ENCODE measurements at regions of chr7 and their contacts with region 1.

Region 1: DNA sequence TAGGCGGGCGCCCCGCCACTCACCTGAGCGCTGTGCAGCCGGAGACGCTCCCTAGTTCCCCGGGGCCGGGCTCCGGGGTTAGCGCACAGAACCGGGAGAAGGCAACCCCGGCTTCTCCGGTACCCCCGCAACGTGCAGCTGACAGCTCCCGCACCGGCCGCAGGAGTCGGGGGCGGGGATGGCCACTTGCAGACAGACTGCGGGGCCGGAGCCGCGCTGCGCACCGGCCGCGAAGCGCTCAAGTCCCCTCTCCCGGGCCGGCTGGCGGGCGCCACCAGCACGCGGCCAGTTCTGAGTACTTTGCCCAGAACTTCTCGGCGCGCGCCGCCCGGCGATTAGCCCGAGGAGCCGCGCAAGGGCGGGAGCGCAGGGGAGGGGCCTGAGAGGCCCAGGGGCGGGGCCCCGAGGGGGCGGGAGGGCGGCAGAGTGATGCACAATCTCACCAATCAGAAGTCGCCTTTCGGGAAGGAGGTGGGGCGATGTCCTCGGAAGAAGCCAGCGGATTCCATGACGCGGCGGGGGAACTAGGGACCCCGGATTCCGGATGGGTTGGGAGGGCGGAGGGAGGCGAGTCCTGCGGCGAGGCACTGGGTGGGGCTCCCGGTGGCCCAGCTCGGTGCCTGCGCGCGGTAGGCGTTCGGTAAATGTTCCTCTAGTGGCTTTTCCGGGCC is at the start of gene OSBPL3:
- DNase-seq: peak; percentile 90 to 98 (median 94)
- ATAC-seq: peak; percentile 80
- H3K4me3 ChIP-seq: peak within 1 kb of the TSS; percentile 84
- H3K4me3 Mint-ChIP-seq: peak within 1 kb of the TSS; percentile 98
- H3K27ac ChIP-seq: peak within 1 kb of the TSS; percentile 71 to 77
- H3K27ac Mint-ChIP-seq: peak within 1 kb of the TSS; percentile 86
- H3K4me1 ChIP-seq: peaks cover 47% of the 10 kb centered on the region
- H3K4me1 Mint-ChIP-seq: peaks cover 66% of the 10 kb centered on the region
- H3K27me3 ChIP-seq: no peaks in the 10 kb centered on the region
- H3K27me3 Mint-ChIP-seq: no peaks in the 10 kb centered on the region
- CTCF ChIP-seq: peak; percentile 6
- total RNA-seq, gene OSBPL3: 25.4 to 25.9 TPM

Region 2: GRCh38 chr7:24819916-24820689 is 159.9 kb before region 1 on chr7:
- CTCF ChIA-PET with region 1: interaction called, 23 read pairs
- POLR2A ChIA-PET with region 1: interaction called, 86 read pairs
- intact Hi-C with region 1: loop called (anchors 1 to 2 kb)
- DNase-seq: peak; percentile 45 to 89 (median 62)
- ATAC-seq: peak; percentile 7
- H3K4me3 ChIP-seq: peak overlapping the region; percentile 15
- H3K4me3 Mint-ChIP-seq: peak overlapping the region; percentile 84
- H3K27ac ChIP-seq: peak overlapping the region; percentile 86 to 87
- H3K27ac Mint-ChIP-seq: peak overlapping the region; percentile 97
- H3K4me1 ChIP-seq: peaks cover 34% of the 10 kb centered on the region
- H3K4me1 Mint-ChIP-seq: peaks cover 38% of the 10 kb centered on the region
- H3K27me3 ChIP-seq: no peaks in the 10 kb centered on the region
- H3K27me3 Mint-ChIP-seq: no peaks in the 10 kb centered on the region
- CTCF ChIP-seq: peak; percentile 95

Region 3: DNA sequence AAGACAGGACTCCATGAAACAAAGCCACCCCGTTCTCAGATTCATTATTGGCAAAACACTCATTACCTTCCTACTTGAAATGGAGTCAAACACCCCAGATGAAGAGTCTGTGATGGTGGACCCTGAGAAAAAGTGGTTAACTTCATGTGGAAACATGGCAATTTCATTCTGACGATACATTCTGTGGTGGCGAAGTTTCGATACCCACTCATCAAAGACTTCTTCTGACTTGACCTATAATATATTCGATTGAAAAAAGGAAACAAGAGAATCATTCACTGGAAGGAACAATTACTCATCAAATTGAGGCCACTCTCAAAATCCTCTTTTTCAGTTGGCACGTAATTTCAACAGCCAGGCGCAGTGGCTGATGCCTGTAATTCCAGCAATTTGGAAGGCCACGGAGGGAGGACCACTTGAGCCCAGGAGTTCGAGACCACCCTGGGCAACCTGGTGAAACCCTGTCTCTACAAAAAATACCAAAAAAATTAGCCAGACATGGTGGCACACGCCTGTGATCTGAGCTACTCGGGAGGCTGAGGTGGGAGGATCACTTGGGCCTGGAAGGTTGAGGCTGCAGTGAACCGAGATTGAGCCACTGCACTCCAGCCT is 113.9 kb before region 1 on chr7:
- CTCF ChIA-PET with region 1: no interaction called
- POLR2A ChIA-PET with region 1: no interaction called
- intact Hi-C with region 1: no loop called
- DNase-seq: no peak
- ATAC-seq: no peak
- H3K4me3 ChIP-seq: no peak overlapping the region
- H3K4me3 Mint-ChIP-seq: no peak overlapping the region
- H3K27ac ChIP-seq: no peak overlapping the region
- H3K27ac Mint-ChIP-seq: no peak overlapping the region
- H3K4me1 ChIP-seq: no peaks in the 10 kb centered on the region
- H3K4me1 Mint-ChIP-seq: no peaks in the 10 kb centered on the region
- H3K27me3 ChIP-seq: no peaks in the 10 kb centered on the region
- H3K27me3 Mint-ChIP-seq: no peaks in the 10 kb centered on the region
- CTCF ChIP-seq: no peak

Region 4: DNA sequence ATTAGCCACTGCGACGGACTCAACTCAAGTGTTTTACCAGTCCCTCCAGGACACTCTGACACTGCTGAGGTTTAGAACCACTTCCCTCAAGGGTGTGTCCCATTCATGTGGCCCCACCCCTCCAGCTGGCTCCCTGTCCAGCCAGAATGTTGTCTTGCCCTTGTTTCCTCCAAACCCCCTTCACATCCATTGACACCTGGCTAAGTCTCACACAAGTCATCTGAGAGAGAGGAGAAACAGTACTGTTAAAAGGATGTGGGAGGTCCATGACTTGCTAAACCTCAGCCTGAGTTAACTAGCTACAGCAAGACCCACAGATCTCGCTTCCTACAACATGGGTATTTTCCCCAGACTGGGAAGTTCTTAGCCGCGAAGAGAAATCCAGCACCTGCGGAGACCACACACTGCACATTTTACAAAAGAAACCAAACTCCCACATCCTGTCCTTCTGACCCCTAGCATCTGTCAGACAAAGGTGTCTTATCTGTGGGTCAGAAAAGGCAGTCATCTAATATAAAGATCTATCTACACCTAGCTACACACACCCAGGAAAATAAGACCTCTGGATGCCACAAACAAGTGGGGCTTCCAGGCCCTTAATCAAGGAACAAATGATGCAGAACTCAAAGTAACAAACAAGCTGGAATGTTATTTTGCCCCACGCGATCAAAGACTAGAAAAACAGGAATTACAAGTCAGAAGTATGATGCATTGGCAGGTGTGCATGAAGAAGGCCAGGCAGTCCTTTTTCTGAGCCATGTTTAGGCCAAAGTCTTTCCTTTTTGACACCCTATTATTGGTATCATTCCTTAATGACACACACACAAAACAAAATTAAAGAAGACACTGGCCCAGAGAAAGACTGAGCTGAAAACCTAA is 13.9 kb before region 1 on chr7:
- CTCF ChIA-PET with region 1: interaction called, 14 read pairs
- POLR2A ChIA-PET with region 1: interaction called, 51 read pairs
- intact Hi-C with region 1: no loop called
- DNase-seq: peak in 7 of 14 experiments; percentile 19 to 72 (median 58)
- ATAC-seq: peak; percentile 78
- H3K4me3 ChIP-seq: no peak overlapping the region
- H3K4me3 Mint-ChIP-seq: peak overlapping the region; percentile 38
- H3K27ac ChIP-seq: peak overlapping the region; percentile 29 to 49
- H3K27ac Mint-ChIP-seq: peak overlapping the region; percentile 76
- H3K4me1 ChIP-seq: peaks cover 33% of the 10 kb centered on the region
- H3K4me1 Mint-ChIP-seq: peaks cover 73% of the 10 kb centered on the region
- H3K27me3 ChIP-seq: no peaks in the 10 kb centered on the region
- H3K27me3 Mint-ChIP-seq: no peaks in the 10 kb centered on the region
- CTCF ChIP-seq: no peak

Region 5: DNA sequence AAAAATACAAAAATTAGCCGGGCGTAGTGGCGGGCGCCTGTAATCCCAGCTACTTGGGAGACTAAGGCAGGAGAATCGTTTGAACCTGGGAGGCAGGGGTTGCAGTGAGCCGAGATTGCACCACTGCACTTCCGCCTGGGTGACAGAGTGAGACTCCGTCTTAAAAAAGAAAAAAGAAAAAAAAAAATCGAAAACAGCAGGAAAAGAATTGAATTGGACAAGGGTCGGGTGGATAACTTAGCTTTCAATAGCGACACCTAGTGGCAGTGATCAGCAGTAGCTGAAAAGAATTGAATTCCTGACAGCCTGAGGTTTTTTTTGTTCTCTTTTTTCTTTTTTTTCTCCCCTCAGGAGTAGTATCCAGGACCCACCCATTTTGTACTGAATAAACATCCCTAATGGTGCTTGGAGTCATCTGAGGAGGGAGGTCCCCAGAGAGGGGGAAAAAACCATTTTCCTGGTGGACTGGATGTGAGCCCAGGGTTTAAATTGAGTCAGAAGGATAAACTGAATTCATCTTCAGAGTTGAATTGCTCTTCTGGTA is 90.0 kb after region 1 on chr7:
- CTCF ChIA-PET with region 1: interaction called, 11 read pairs
- POLR2A ChIA-PET with region 1: interaction called, 11 read pairs
- intact Hi-C with region 1: loop called (anchors 2 kb)
- DNase-seq: peak in 11 of 14 experiments; percentile 6 to 82 (median 36)
- ATAC-seq: peak; percentile 66
- H3K4me3 ChIP-seq: no peak overlapping the region
- H3K4me3 Mint-ChIP-seq: no peak overlapping the region
- H3K27ac ChIP-seq: no peak overlapping the region
- H3K27ac Mint-ChIP-seq: no peak overlapping the region
- H3K4me1 ChIP-seq: peaks cover 3% of the 10 kb centered on the region
- H3K4me1 Mint-ChIP-seq: no peaks in the 10 kb centered on the region
- H3K27me3 ChIP-seq: no peaks in the 10 kb centered on the region
- H3K27me3 Mint-ChIP-seq: no peaks in the 10 kb centered on the region
- CTCF ChIP-seq: peak; percentile 96

Region 6: GRCh38 chr7:25125137-25125946 is 145.3 kb after region 1 on chr7 and contains the start of gene CYCS:
- CTCF ChIA-PET with region 1: interaction called, 3 read pairs
- POLR2A ChIA-PET with region 1: interaction called, 33 read pairs
- intact Hi-C with region 1: loop called in 1 of 2 experiments (anchors 5 kb)
- DNase-seq: peak; percentile 99 to 100 (median 99)
- ATAC-seq: peak; percentile 90
- H3K4me3 ChIP-seq: peak within 1 kb of the TSS; percentile 92
- H3K4me3 Mint-ChIP-seq: peak within 1 kb of the TSS; percentile 99
- H3K27ac ChIP-seq: peak within 1 kb of the TSS; percentile 92 to 94
- H3K27ac Mint-ChIP-seq: peak within 1 kb of the TSS; percentile 99
- H3K4me1 ChIP-seq: peaks cover 14% of the 10 kb centered on the region
- H3K4me1 Mint-ChIP-seq: peaks cover 40% of the 10 kb centered on the region
- H3K27me3 ChIP-seq: no peaks in the 10 kb centered on the region
- H3K27me3 Mint-ChIP-seq: no peaks in the 10 kb centered on the region
- CTCF ChIP-seq: no peak
- total RNA-seq, gene CYCS: 126 to 131 TPM

Region 7: GRCh38 chr7:25846722-25847121 is 866.7 kb after region 1 on chr7:
- CTCF ChIA-PET with region 1: no interaction called
- POLR2A ChIA-PET with region 1: no interaction called
- intact Hi-C with region 1: no loop called
- DNase-seq: no peak
- ATAC-seq: no peak
- H3K4me3 ChIP-seq: no peak overlapping the region
- H3K4me3 Mint-ChIP-seq: no peak overlapping the region
- H3K27ac ChIP-seq: no peak overlapping the region
- H3K27ac Mint-ChIP-seq: no peak overlapping the region
- H3K4me1 ChIP-seq: peaks cover 6% of the 10 kb centered on the region
- H3K4me1 Mint-ChIP-seq: peaks cover 3% of the 10 kb centered on the region
- H3K27me3 ChIP-seq: peaks cover 24 to 27% of the 10 kb centered on the region in 2 experiments
- H3K27me3 Mint-ChIP-seq: peaks cover 78% of the 10 kb centered on the region
- CTCF ChIP-seq: no peak

Measured in CD4-positive, alpha-beta T cell (primary cell).